ENCODE measurements at regions of chr10 and their contacts with region 1.

Region 1: DNA sequence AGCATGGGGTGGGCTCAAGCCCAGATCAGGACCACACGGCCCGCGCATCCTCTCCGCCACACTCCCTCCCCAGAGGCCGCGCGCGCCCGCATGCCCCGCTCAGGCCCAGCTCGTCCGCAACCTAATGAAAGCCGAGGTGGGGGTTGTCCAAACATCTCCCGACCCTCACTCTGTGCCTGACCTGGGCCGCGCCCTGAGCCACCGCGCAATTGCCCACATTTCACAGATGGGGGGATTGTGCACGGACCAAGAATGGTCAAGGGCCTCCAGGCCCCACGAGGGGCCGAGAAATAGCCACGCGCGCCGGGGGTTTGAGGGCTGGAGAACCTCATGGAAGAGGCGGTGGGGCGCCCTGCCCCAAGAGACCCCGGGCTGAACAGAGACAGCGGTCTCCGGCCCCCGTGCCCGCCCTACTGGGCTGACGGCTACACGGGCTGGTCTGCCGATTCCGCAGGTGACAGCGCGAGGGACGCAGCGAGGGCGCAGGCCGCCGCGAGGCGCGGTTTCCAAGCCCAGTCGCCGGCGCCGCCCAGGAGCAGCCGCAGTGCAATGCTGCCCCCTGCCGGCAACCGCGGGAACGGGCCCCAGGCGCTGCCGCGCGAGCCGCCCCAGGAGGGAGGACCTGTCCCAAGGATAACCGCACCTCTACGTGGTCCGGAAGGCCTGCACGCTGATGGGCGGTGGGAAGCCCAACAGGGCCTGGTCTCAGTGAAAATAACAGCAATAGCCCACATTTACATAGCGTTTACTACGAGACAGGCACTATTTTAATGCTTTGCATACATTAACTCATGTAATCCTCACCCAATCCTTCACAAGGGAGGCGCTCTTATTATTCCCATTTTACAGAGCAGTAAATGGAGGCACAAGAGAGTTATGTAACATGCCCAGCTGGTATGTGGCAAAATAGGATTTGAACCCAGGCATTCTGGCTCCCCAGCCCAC is 10.5 kb upstream of the GRID1 start:
- DNase-seq: peak; percentile 93

Region 2: GRCh38 chr10:85786401-85786899 is 590.7 kb before region 1 on chr10:
- intact Hi-C with region 1: loop called in 1 of 2 experiments (anchors 10 kb)
- DNase-seq: no peak

Region 3: DNA sequence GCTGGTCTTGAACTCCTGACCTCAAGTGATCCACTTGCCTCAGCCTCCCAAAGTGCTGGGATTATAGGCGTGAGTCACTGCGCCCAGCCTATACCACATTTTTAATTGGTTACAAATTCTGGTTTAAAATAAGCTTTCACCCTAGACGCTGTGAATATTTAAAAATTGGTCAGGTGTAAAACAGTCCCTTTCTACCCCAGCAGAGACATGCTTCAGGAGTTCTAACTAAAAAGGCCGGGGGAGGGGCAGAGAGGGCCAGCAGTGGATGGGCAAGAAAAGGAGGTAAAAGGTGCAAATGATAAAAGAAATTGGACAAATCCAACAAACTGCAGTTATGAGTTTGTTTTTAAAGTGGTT is 74.5 kb after region 1 on chr10:
- intact Hi-C with region 1: no loop called
- DNase-seq: no peak

Measured in posterior vena cava (tissue), 2 donors.